ENCODE measurements at regions of chr14 and their contacts with region 1.

Region 1: GRCh38 chr14:22766456-22767322 is at the start of gene OXA1L:
- DNase-seq: peak; percentile 86 to 99 (median 96)
- ATAC-seq: peak; percentile 94
- H3K4me3 ChIP-seq: peak within 1 kb of the TSS; percentile 87
- H3K4me3 Mint-ChIP-seq: peak within 1 kb of the TSS; percentile 85
- H3K27ac ChIP-seq: peak within 1 kb of the TSS; percentile 80
- H3K27ac Mint-ChIP-seq: peak within 1 kb of the TSS; percentile 88
- H3K4me1 ChIP-seq: peaks cover 23% of the 10 kb centered on the region
- H3K4me1 Mint-ChIP-seq: peaks cover 33% of the 10 kb centered on the region
- H3K27me3 ChIP-seq: no peaks in the 10 kb centered on the region
- H3K27me3 Mint-ChIP-seq: no peaks in the 10 kb centered on the region
- CTCF ChIP-seq: no peak
- total RNA-seq, gene OXA1L: 176 to 177 TPM

Region 2: GRCh38 chr14:21510735-21511657 is 1255.7 kb before region 1 on chr14 and contains the start of gene METTL3:
- CTCF ChIA-PET with region 1: no interaction called
- POLR2A ChIA-PET with region 1: interaction called, 7 read pairs
- intact Hi-C with region 1: loop called in 1 of 2 experiments (anchors 2 kb)
- DNase-seq: peak; percentile 88 to 98 (median 90)
- ATAC-seq: peak; percentile 99
- H3K4me3 ChIP-seq: peak within 1 kb of the TSS; percentile 83
- H3K4me3 Mint-ChIP-seq: peak within 1 kb of the TSS; percentile 98
- H3K27ac ChIP-seq: peak within 1 kb of the TSS; percentile 82 to 84
- H3K27ac Mint-ChIP-seq: peak within 1 kb of the TSS; percentile 98
- H3K4me1 ChIP-seq: peaks cover 30% of the 10 kb centered on the region
- H3K4me1 Mint-ChIP-seq: peaks cover 45% of the 10 kb centered on the region
- H3K27me3 ChIP-seq: no peaks in the 10 kb centered on the region
- H3K27me3 Mint-ChIP-seq: no peaks in the 10 kb centered on the region
- CTCF ChIP-seq: no peak
- total RNA-seq, gene METTL3: 31.9 to 34.5 TPM

Region 3: GRCh38 chr14:22598099-22598899 is 168.4 kb before region 1 on chr14 and contains the start of gene ABHD4:
- CTCF ChIA-PET with region 1: no interaction called
- POLR2A ChIA-PET with region 1: interaction called, 11 read pairs
- intact Hi-C with region 1: no loop called
- DNase-seq: peak; percentile 14 to 77 (median 50)
- ATAC-seq: peak; percentile 61
- H3K4me3 ChIP-seq: peak within 1 kb of the TSS; percentile 75
- H3K4me3 Mint-ChIP-seq: peak within 1 kb of the TSS; percentile 98
- H3K27ac ChIP-seq: peak within 1 kb of the TSS; percentile 34 to 38
- H3K27ac Mint-ChIP-seq: peak within 1 kb of the TSS; percentile 77
- H3K4me1 ChIP-seq: peaks cover 21% of the 10 kb centered on the region
- H3K4me1 Mint-ChIP-seq: peaks cover 24% of the 10 kb centered on the region
- H3K27me3 ChIP-seq: no peaks in the 10 kb centered on the region
- H3K27me3 Mint-ChIP-seq: no peaks in the 10 kb centered on the region
- CTCF ChIP-seq: no peak
- total RNA-seq, gene ABHD4: 7.1 to 8.9 TPM

Region 4: GRCh38 chr14:22699801-22700564 is 66.7 kb before region 1 on chr14:
- CTCF ChIA-PET with region 1: no interaction called
- POLR2A ChIA-PET with region 1: no interaction called
- intact Hi-C with region 1: no loop called
- DNase-seq: no peak
- ATAC-seq: no peak
- H3K4me3 ChIP-seq: no peak overlapping the region
- H3K4me3 Mint-ChIP-seq: no peak overlapping the region
- H3K27ac ChIP-seq: no peak overlapping the region
- H3K27ac Mint-ChIP-seq: no peak overlapping the region
- H3K4me1 ChIP-seq: no peaks in the 10 kb centered on the region
- H3K4me1 Mint-ChIP-seq: no peaks in the 10 kb centered on the region
- H3K27me3 ChIP-seq: peaks cover 13 to 34% of the 10 kb centered on the region in 2 experiments
- H3K27me3 Mint-ChIP-seq: peaks cover 53% of the 10 kb centered on the region
- CTCF ChIP-seq: no peak

Region 5: GRCh38 chr14:22737052-22737451 is 29.6 kb before region 1 on chr14:
- CTCF ChIA-PET with region 1: no interaction called
- POLR2A ChIA-PET with region 1: no interaction called
- intact Hi-C with region 1: no loop called
- DNase-seq: no peak
- ATAC-seq: no peak
- H3K4me3 ChIP-seq: no peak overlapping the region
- H3K4me3 Mint-ChIP-seq: no peak overlapping the region
- H3K27ac ChIP-seq: no peak overlapping the region
- H3K27ac Mint-ChIP-seq: no peak overlapping the region
- H3K4me1 ChIP-seq: no peaks in the 10 kb centered on the region
- H3K4me1 Mint-ChIP-seq: peaks cover 4% of the 10 kb centered on the region
- H3K27me3 ChIP-seq: peaks cover 0 to 2% of the 10 kb centered on the region in 2 experiments
- H3K27me3 Mint-ChIP-seq: no peaks in the 10 kb centered on the region
- CTCF ChIP-seq: no peak

Region 6: DNA sequence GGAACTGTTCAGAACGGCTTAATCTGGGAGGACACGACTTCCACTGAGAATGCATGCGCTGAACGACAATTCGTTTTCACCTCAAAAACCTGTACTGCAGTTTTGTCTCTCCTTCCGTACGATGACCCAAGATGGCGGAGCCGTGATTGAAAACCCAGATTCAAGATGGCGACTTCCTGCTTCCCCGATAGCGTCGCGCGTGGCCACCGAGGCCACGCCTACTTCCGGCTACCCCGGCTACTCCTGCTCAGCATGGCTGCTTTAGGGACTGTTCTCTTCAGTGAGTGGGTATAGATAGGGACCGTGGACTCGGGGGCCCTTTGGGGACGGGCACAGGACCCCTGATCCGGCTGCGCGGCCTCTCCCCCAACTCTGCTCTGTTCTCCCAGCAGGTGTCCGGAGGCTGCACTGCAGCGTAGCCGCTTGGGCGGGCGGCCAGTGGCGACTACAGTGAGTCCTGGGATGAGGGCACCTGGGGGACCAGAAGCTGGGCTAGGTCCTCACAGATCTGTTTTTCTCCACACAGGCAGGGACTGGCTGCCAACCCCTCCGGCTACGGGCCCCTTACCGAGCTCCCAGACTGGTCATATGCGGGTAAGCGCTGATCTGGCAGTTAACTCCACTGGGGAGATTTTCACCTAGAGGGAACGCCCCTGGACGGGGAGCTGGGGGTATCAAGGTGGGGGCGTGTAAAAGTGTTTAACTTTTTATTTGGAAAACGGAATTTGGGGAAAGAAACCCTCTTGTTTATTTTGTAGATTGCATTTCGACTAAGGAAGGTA is 63.2 kb after region 1 on chr14 and contains the start of gene MRPL52:
- CTCF ChIA-PET with region 1: interaction called, 4 read pairs
- POLR2A ChIA-PET with region 1: interaction called, 20 read pairs
- intact Hi-C with region 1: loop called in 1 of 2 experiments (anchors 5 kb)
- DNase-seq: peak; percentile 84 to 97 (median 89)
- ATAC-seq: peak; percentile 94
- H3K4me3 ChIP-seq: peak within 1 kb of the TSS; percentile 78
- H3K4me3 Mint-ChIP-seq: peak within 1 kb of the TSS; percentile 85
- H3K27ac ChIP-seq: peak within 1 kb of the TSS; percentile 79 to 89
- H3K27ac Mint-ChIP-seq: peak within 1 kb of the TSS; percentile 89
- H3K4me1 ChIP-seq: peaks cover 22% of the 10 kb centered on the region
- H3K4me1 Mint-ChIP-seq: peaks cover 33% of the 10 kb centered on the region
- H3K27me3 ChIP-seq: peaks cover 0 to 3% of the 10 kb centered on the region in 2 experiments
- H3K27me3 Mint-ChIP-seq: peaks cover 5% of the 10 kb centered on the region
- CTCF ChIP-seq: no peak
- total RNA-seq, gene MRPL52: 27.6 to 29.4 TPM

Region 7: GRCh38 chr14:23034483-23035302 is 268.0 kb after region 1 on chr14 and contains the start of gene PSMB5:
- CTCF ChIA-PET with region 1: no interaction called
- POLR2A ChIA-PET with region 1: interaction called, 3 read pairs
- intact Hi-C with region 1: loop called in 1 of 2 experiments (anchors 2 kb)
- DNase-seq: peak; percentile 76 to 97 (median 80)
- ATAC-seq: peak; percentile 89
- H3K4me3 ChIP-seq: peak within 1 kb of the TSS; percentile 59
- H3K4me3 Mint-ChIP-seq: peak within 1 kb of the TSS; percentile 90
- H3K27ac ChIP-seq: peak within 1 kb of the TSS; percentile 75 to 94
- H3K27ac Mint-ChIP-seq: peak within 1 kb of the TSS; percentile 92
- H3K4me1 ChIP-seq: peaks cover 16% of the 10 kb centered on the region
- H3K4me1 Mint-ChIP-seq: peaks cover 36% of the 10 kb centered on the region
- H3K27me3 ChIP-seq: no peaks in the 10 kb centered on the region
- H3K27me3 Mint-ChIP-seq: no peaks in the 10 kb centered on the region
- CTCF ChIP-seq: no peak
- total RNA-seq, gene PSMB5: 20.1 to 24.5 TPM

Measured in CD4-positive, alpha-beta T cell (primary cell).